ENCODE measurements at regions of chr1 and their contacts with region 1.

Region 1: GRCh38 chr1:201447911-201448871 is 20.8 kb downstream of the PHLDA3 start:
- ATAC-seq: peak; percentile 81 to 97 (median 85)
- H3K4me3 ChIP-seq: no peak overlapping the region
- H3K27ac ChIP-seq: no peak overlapping the region
- H3K4me1 ChIP-seq: peaks cover 25 to 30% of the 10 kb centered on the region in 2 donors

Region 2: GRCh38 chr1:201511941-201512539 is 63.8 kb after region 1 on chr1:
- in situ Hi-C with region 1: loop called in 1 of 9 experiments (anchors 10 kb)
- ATAC-seq: peak in 7 of 8 experiments; percentile 41 to 70 (median 57)
- H3K4me3 ChIP-seq: no peak overlapping the region
- H3K27ac ChIP-seq: no peak overlapping the region
- H3K4me1 ChIP-seq: peaks cover 9 to 11% of the 10 kb centered on the region in 2 donors

Region 3: GRCh38 chr1:201608635-201609395 is 160.6 kb after region 1 on chr1:
- in situ Hi-C with region 1: no loop called
- ATAC-seq: peak in 1 of 8 experiments; percentile 16
- H3K4me3 ChIP-seq: no peak overlapping the region
- H3K27ac ChIP-seq: no peak overlapping the region
- H3K4me1 ChIP-seq: peaks cover 25 to 37% of the 10 kb centered on the region in 2 donors

Region 4: DNA sequence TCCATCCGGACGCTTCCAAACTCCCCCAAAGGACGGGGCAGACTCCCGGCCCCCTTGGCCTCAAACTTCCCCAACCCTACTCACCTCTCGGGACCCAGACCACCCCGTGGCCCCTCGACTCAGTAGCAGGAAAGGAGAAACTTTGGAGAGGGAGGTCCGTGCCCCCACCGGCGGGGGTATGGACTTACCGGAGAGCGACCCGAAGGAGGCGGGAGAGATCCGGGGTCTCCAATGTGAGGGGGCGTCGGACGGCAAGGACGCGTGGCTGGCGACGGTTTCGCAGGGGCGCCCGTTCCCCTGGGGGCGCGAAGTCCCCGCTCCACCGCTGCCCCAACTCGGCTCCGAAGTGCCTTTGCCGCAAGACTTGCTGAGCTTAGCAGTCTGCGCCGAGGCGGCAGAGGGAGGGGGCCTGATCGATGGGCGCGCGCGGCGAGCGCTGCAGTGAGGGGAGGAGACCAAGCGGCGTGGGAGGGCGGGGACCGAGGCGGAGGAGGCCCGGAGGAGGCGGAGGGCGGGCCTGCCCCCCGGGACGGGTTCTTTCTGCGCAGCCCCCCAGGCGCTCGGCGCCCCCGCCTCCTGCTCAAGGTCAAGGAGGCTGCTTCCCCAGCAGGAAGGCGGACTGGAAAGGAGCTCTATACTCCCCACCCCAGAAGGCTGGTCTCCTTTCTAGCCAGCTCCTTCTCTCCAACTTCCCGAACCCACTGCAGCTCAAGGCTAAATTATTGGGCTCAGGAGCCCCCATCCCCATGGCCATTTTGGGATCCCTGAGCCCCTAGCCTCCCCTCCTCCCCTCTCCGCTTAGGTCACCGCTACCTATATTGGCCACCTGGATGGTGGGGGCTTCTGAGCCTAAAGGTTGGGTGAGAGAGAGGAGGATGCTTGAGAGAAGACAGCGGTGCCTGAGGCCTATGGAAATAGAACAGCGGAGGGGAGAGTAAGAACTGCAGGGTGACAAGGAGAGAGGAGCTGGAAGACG is 1262.2 kb after region 1 on chr1 and contains the start of gene SYT2:
- in situ Hi-C with region 1: no loop called
- ATAC-seq: peak; percentile 87 to 94 (median 92)
- H3K4me3 ChIP-seq: peak within 1 kb of the TSS; percentile 22 to 32 (median 30)
- H3K27ac ChIP-seq: no peak within 1 kb of the TSS
- H3K4me1 ChIP-seq: peaks cover 35 to 39% of the 10 kb centered on the region in 2 donors
- total RNA-seq, gene SYT2: 0.29 to 23.5 (median 5.5) TPM